Gastrocnemius medialis (tissue), 4 donors: ENCODE measurements at regions of chr12 and their contacts with region 1.

Region 1: DNA sequence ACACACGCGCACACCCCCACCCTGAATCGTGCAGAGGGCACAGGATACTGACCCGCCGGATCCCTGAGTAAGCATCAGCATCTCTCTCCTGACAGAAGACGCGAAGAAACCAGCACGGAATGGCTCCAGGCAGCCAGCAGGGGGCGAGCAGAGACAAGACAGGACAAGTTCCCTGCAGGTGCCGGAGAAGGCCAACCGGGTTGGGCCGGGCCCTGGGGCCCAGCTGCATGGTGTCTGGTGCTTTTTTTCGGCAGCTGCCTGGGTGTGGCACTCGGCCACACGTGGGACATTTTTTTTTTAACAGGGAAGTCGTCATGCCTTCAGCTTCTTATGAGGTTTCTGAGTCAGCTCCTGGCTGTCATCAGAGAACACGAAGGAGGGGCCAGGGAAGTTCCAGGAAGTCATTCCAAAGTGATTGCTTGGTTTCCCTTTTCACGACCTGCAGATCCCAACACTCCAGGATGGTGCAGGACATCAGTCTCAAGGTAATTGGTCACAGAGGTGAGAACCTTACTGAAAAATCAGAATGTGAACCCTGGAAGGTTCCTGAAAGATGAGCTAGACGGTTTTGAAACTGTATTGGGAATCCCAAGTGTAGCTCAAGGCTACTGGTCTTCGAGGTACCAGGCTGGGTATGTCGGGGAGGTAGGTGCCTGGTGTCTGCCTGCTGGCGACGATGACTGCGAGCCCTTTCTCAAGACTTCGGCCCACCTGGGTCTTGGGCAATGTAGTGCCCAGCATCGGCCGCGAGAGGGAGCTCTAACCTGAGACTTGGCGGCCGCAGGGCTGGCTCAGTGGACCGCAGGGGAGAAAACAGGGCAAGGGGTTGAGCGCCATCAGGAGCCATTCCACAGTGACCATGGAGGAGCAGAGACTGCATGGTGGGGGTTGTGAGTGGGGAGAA is 190.8 kb upstream of the PRMT8 start:
- DNase-seq: peak; percentile 90 to 92
- ATAC-seq: peak; percentile 93 to 96
- H3K4me3 ChIP-seq: peak overlapping the region in 3 of 4 donors; percentile 15 to 43 (median 28)
- H3K27ac ChIP-seq: peak overlapping the region; percentile 64 to 76 (median 74)
- H3K4me1 ChIP-seq: peaks cover 14% of the 10 kb centered on the region in 2 donors
- H3K27me3 ChIP-seq: no peaks in the 10 kb centered on the region
- CTCF ChIP-seq: peak; percentile 82 to 91 (median 84)
- POLR2A ChIP-seq: no peak

Region 2: GRCh38 chr12:3097186-3097804 is 202.9 kb before region 1 on chr12:
- in situ Hi-C with region 1: no loop called
- intact Hi-C with region 1: no loop called
- DNase-seq: peak in 1 of 2 donors; percentile 33
- ATAC-seq: peak; percentile 62 to 74
- H3K4me3 ChIP-seq: peak overlapping the region in 2 of 4 donors; percentile 6 to 7
- H3K27ac ChIP-seq: peak overlapping the region; percentile 47 to 74 (median 68)
- H3K4me1 ChIP-seq: peaks cover 7 to 10% of the 10 kb centered on the region in 2 donors
- H3K27me3 ChIP-seq: no peaks in the 10 kb centered on the region
- CTCF ChIP-seq: no peak
- POLR2A ChIP-seq: no peak

Region 3: GRCh38 chr12:3363608-3364007 is 63.4 kb after region 1 on chr12:
- in situ Hi-C with region 1: no loop called
- intact Hi-C with region 1: no loop called
- DNase-seq: peak in 1 of 2 donors; percentile 28
- ATAC-seq: no peak
- H3K4me3 ChIP-seq: no peak overlapping the region
- H3K27ac ChIP-seq: no peak overlapping the region
- H3K4me1 ChIP-seq: no peaks in the 10 kb centered on the region
- H3K27me3 ChIP-seq: peaks cover 21 to 32% (median 24%) of the 10 kb centered on the region in 3 donors
- CTCF ChIP-seq: no peak
- POLR2A ChIP-seq: no peak

Region 4: GRCh38 chr12:3641428-3642018 is 341.3 kb after region 1 on chr12:
- in situ Hi-C with region 1: loop called in 1 of 4 experiments (anchors 25 kb)
- intact Hi-C with region 1: no loop called
- DNase-seq: no peak
- ATAC-seq: peak in 1 of 2 donors; percentile 12
- H3K4me3 ChIP-seq: no peak overlapping the region
- H3K27ac ChIP-seq: no peak overlapping the region
- H3K4me1 ChIP-seq: no peaks in the 10 kb centered on the region
- H3K27me3 ChIP-seq: no peaks in the 10 kb centered on the region
- CTCF ChIP-seq: no peak
- POLR2A ChIP-seq: no peak

Region 5: GRCh38 chr12:3658327-3659163 is 358.4 kb after region 1 on chr12:
- in situ Hi-C with region 1: no loop called
- intact Hi-C with region 1: loop called (anchors 10 kb)
- DNase-seq: peak in 1 of 2 donors; percentile 21
- ATAC-seq: no peak
- H3K4me3 ChIP-seq: no peak overlapping the region
- H3K27ac ChIP-seq: no peak overlapping the region
- H3K4me1 ChIP-seq: no peaks in the 10 kb centered on the region
- H3K27me3 ChIP-seq: no peaks in the 10 kb centered on the region
- CTCF ChIP-seq: peak in 3 of 5 experiments; percentile 17 to 35 (median 23)
- POLR2A ChIP-seq: no peak

Region 6: DNA sequence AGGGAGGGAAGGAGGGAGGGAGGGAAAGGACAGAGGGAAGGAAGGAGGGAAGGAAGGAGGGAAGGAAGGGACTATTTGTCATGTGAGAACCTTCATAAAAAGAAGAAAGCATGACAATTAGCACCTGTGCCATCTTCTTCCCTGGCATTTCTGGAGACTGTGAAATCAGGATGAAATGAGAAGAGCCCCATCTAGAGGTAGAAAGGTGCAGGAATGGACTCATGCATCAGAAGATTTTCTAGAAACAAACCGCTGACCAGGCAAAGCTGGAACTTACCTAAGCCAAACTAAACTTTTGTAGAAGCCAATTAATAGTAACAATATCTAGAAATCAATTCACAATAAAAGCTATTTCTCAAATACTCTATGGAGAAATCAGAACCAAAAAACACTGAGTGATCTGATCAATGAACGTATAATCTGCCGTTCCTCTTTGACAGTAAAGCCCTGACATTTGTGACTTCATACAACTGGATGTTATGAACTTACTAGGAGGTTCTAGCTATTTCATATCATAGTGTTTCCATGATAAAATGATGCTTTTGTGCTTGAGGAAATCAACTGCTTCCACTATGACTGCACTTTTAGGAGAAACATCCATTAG is 477.1 kb after region 1 on chr12:
- in situ Hi-C with region 1: loop called in 2 of 4 experiments (anchors 5 to 10 kb)
- intact Hi-C with region 1: loop called (anchors 1 kb)
- DNase-seq: no peak
- ATAC-seq: peak; percentile 83 to 85
- H3K4me3 ChIP-seq: no peak overlapping the region
- H3K27ac ChIP-seq: no peak overlapping the region
- H3K4me1 ChIP-seq: peaks cover 0 to 4% of the 10 kb centered on the region in 2 donors
- H3K27me3 ChIP-seq: no peaks in the 10 kb centered on the region
- CTCF ChIP-seq: peak; percentile 44 to 71 (median 56)
- POLR2A ChIP-seq: no peak

Region 7: GRCh38 chr12:3803865-3804472 is 503.8 kb after region 1 on chr12:
- in situ Hi-C with region 1: loop called (anchors 5 to 10 kb)
- intact Hi-C with region 1: loop called (anchors 1 kb)
- DNase-seq: peak; percentile 26 to 59
- ATAC-seq: peak; percentile 73 to 86
- H3K4me3 ChIP-seq: no peak overlapping the region
- H3K27ac ChIP-seq: no peak overlapping the region
- H3K4me1 ChIP-seq: no peaks in the 10 kb centered on the region
- H3K27me3 ChIP-seq: no peaks in the 10 kb centered on the region
- CTCF ChIP-seq: peak; percentile 60 to 83 (median 71)
- POLR2A ChIP-seq: no peak